Activated T-helper 1 cell treated with anti-CD3 and anti-CD28 coated beads, Interleukin-12 subunit alpha, Interleukin-12 subunit beta, Interleukin-2, Interleukin-4 antibody, amounts not matched to agents 30 ng/mL and 10 ng/mL and 1 ng/mL, durations not matched to agents 14 hours and 24 hours and 36 hours (primary cell): ENCODE measurements at regions of chr7 and their contacts with region 1.

Region 1: GRCh38 chr7:105013221-105013815 is 687 bp upstream of the KMT2E start:
- DNase-seq: peak; percentile 92
- H3K4me3 Mint-ChIP-seq: peak overlapping the region; percentile 99
- H3K27ac Mint-ChIP-seq: peak overlapping the region; percentile 96
- H3K4me1 Mint-ChIP-seq: peaks cover 43% of the 10 kb centered on the region
- H3K27me3 Mint-ChIP-seq: peaks cover 3% of the 10 kb centered on the region

Region 2: GRCh38 chr7:104207731-104208420 is 805.4 kb before region 1 on chr7 and contains the start of gene ORC5:
- intact Hi-C with region 1: loop called (anchors 5 kb)
- DNase-seq: peak; percentile 79
- H3K4me3 Mint-ChIP-seq: peak within 1 kb of the TSS; percentile 94
- H3K27ac Mint-ChIP-seq: peak within 1 kb of the TSS; percentile 92
- H3K4me1 Mint-ChIP-seq: peaks cover 43% of the 10 kb centered on the region
- H3K27me3 Mint-ChIP-seq: peaks cover 8% of the 10 kb centered on the region
- total RNA-seq, gene ORC5: 32.5 and 35.8 TPM in 2 replicates

Region 3: GRCh38 chr7:104956753-104957450 is 56.4 kb before region 1 on chr7:
- intact Hi-C with region 1: loop called (anchors 1 kb)
- DNase-seq: peak; percentile 62
- H3K4me3 Mint-ChIP-seq: peak overlapping the region; percentile 69
- H3K27ac Mint-ChIP-seq: peak overlapping the region; percentile 100
- H3K4me1 Mint-ChIP-seq: peaks cover 67% of the 10 kb centered on the region
- H3K27me3 Mint-ChIP-seq: no peaks in the 10 kb centered on the region

Region 4: GRCh38 chr7:104967595-104967994 is 45.7 kb before region 1 on chr7:
- intact Hi-C with region 1: no loop called
- DNase-seq: no peak
- H3K4me3 Mint-ChIP-seq: no peak overlapping the region
- H3K27ac Mint-ChIP-seq: no peak overlapping the region
- H3K4me1 Mint-ChIP-seq: peaks cover 29% of the 10 kb centered on the region
- H3K27me3 Mint-ChIP-seq: no peaks in the 10 kb centered on the region

Region 5: GRCh38 chr7:105003275-105003674 is 10.0 kb before region 1 on chr7:
- intact Hi-C with region 1: loop called (anchors 1 kb)
- DNase-seq: no peak
- H3K4me3 Mint-ChIP-seq: peak overlapping the region; percentile 58
- H3K27ac Mint-ChIP-seq: peak overlapping the region; percentile 50
- H3K4me1 Mint-ChIP-seq: peaks cover 85% of the 10 kb centered on the region
- H3K27me3 Mint-ChIP-seq: no peaks in the 10 kb centered on the region

Region 6: GRCh38 chr7:105046414-105046813 is 33.1 kb after region 1 on chr7:
- intact Hi-C with region 1: loop called (anchors 2 kb)
- DNase-seq: no peak
- H3K4me3 Mint-ChIP-seq: no peak overlapping the region
- H3K27ac Mint-ChIP-seq: no peak overlapping the region
- H3K4me1 Mint-ChIP-seq: peaks cover 41% of the 10 kb centered on the region
- H3K27me3 Mint-ChIP-seq: no peaks in the 10 kb centered on the region

Region 7: DNA sequence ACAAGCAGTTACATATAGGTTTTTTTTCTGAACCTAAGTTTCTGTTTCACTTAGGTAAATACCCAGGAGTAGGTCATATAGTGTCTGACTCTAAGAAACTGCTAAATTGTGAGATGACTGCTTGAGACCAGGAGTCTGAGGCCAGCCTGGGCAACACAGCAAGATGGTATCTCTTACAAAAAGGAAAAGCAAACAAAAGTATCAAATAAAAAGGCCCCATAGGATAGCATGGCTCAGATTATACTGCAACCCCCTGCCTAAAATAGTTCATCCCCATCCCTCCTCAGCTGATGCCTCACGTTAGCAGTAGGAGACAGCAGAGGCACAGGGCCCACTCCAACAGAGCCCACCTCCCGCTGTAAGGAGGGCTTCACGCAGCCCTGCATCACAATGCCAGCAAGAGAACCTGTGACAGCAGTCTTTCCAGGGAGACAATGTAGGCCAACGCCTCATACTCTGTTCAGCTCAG is 285.2 kb after region 1 on chr7:
- intact Hi-C with region 1: loop called (anchors 1 kb)
- DNase-seq: no peak
- H3K4me3 Mint-ChIP-seq: peak overlapping the region; percentile 19
- H3K27ac Mint-ChIP-seq: peak overlapping the region; percentile 82
- H3K4me1 Mint-ChIP-seq: peaks cover 53% of the 10 kb centered on the region
- H3K27me3 Mint-ChIP-seq: no peaks in the 10 kb centered on the region

Region 8: GRCh38 chr7:105522062-105522936 is 509.0 kb after region 1 on chr7 and contains the start of gene PUS7:
- intact Hi-C with region 1: loop called (anchors 2 kb)
- DNase-seq: peak; percentile 71
- H3K4me3 Mint-ChIP-seq: peak within 1 kb of the TSS; percentile 98
- H3K27ac Mint-ChIP-seq: peak within 1 kb of the TSS; percentile 96
- H3K4me1 Mint-ChIP-seq: peaks cover 14% of the 10 kb centered on the region
- H3K27me3 Mint-ChIP-seq: no peaks in the 10 kb centered on the region
- total RNA-seq, gene PUS7: 47.8 and 50.7 TPM in 2 replicates